K562 (cell line): ENCODE measurements at regions of chr4 and their contacts with region 1.

Region 1: DNA sequence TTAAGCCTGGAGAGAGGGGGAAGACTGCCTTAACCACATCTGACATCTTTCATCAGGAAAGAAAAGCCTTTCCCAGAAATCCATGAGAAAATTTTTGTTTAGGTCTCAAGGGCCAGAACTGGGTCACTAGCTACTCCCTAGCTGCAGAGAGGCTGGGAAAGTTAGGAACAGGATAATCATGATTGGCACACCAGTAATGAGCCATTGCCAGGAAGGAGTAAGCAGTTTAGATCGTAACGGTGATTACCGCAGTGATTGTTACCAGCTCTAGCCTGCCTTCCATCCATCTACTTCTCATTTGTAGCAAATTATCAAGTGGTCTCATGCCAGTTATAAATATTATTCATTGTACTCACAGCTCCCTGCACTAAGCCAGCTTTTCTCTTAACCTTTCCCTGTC is 22.7 kb upstream of the STX18 start:
- DNase-seq: no peak
- ATAC-seq: no peak
- H3K4me3 ChIP-seq: no peak overlapping the region
- H3K27ac ChIP-seq: no peak overlapping the region
- H3K4me1 ChIP-seq: no peaks in the 10 kb centered on the region
- H3K27me3 ChIP-seq: 0 out of 5 replicates have a peak, but pooled peaks cover 0 to 4% of the 10 kb centered on the region in 2 experiments
- CTCF ChIP-seq: no peak
- EP300 ChIP-seq: no peak
- POLR2A ChIP-seq: no peak
- RAD21 ChIP-seq: no peak

Region 2: DNA sequence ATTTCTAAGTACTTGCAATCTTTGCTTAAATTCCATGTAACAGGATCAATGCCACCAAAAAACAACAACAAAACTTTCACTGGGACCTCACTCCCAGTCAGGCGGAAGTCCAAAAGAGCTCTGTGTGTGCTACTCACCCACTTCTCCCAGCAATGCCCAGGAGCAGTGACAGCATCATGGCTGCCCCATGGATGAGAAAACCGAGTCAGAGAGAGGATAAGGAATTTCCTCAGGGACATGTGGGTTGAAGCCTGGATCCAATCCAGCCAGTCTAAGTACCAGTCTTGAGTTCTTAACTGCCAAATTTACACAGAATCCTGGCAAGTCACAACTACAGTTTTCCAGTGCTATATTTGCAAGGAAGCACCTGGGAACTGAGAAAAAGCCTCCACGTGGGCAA is 87.1 kb before region 1 on chr4:
- CTCF ChIA-PET with region 1: no interaction called
- POLR2A ChIA-PET with region 1: no interaction called
- in situ Hi-C with region 1: no loop called
- intact Hi-C with region 1: no loop called
- DNase-seq: no peak
- ATAC-seq: no peak
- H3K4me3 ChIP-seq: no peak overlapping the region
- H3K27ac ChIP-seq: no peak overlapping the region
- H3K4me1 ChIP-seq: no peaks in the 10 kb centered on the region
- H3K27me3 ChIP-seq: no peaks in the 10 kb centered on the region
- CTCF ChIP-seq: no peak
- EP300 ChIP-seq: no peak
- POLR2A ChIP-seq: no peak
- RAD21 ChIP-seq: no peak

Region 3: GRCh38 chr4:4488405-4489404 is 75.8 kb before region 1 on chr4:
- CTCF ChIA-PET with region 1: no interaction called
- POLR2A ChIA-PET with region 1: no interaction called
- in situ Hi-C with region 1: no loop called
- intact Hi-C with region 1: no loop called
- DNase-seq: peak; percentile 69 to 82 (median 72)
- ATAC-seq: peak; percentile 100
- H3K4me3 ChIP-seq: no peak overlapping the region
- H3K27ac ChIP-seq: no peak overlapping the region
- H3K4me1 ChIP-seq: no peaks in the 10 kb centered on the region
- H3K27me3 ChIP-seq: no peaks in the 10 kb centered on the region
- CTCF ChIP-seq: peak; percentile 79 to 90 (median 89)
- EP300 ChIP-seq: no peak
- POLR2A ChIP-seq: no peak
- RAD21 ChIP-seq: peak; percentile 81 to 87

Region 4: DNA sequence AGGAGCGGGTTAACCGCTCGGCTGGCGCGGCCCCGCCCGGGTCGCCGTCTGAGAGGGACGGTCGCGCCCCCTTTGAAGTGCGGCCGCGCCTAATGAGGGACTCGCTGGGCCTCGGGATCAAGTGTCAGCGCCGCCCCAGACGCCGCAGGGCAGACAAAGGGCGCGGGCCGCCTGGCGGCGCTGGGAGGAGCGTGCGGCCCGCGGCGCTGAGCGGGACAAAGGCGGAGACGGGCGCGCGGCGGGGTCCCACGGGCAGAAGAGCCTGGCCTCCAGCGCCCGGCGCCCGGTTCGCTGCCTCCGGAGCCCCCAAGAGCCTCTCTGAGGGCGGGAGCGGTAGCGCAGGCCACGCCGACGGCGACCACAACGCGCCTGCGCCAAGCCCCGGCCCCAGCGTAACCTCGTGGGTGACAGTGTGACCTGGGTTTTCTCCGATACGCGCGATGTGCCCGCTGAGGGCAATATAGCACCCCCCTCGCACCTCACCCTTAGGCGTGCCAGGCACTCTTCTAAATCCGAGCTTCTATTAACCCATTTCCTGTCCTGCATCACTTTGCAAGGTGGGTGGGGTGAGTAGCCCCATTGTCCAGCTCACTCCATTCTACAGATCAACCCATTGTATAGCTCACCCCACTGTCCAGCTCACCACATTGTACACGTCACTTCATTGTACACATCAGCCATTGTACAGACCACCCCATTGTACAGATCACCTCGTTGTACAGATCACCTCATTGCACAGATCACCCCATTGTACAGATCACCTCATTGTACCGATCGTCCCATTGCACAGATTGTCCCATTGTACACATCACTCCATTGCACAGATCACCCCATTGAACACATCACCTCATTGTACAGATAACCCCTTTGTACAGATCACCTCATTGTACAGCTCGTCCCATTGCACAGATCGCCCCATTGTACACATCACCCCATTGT is 11.0 kb after region 1 on chr4:
- CTCF ChIA-PET with region 1: no interaction called
- POLR2A ChIA-PET with region 1: interaction called, 14 read pairs
- in situ Hi-C with region 1: no loop called
- intact Hi-C with region 1: no loop called
- DNase-seq: peak; percentile 77 to 82 (median 80)
- ATAC-seq: peak; percentile 100
- H3K4me3 ChIP-seq: peak overlapping the region; percentile 48
- H3K27ac ChIP-seq: no peak overlapping the region
- H3K4me1 ChIP-seq: peaks cover 2 to 11% of the 10 kb centered on the region in 2 experiments; a peak in 2 of 5 replicates
- H3K27me3 ChIP-seq: no peaks in the 10 kb centered on the region; a peak in 1 of 5 replicates
- CTCF ChIP-seq: peak; percentile 36 to 78 (median 47); a peak in 4 of 6 replicates
- EP300 ChIP-seq: no peak
- POLR2A ChIP-seq: no peak
- RAD21 ChIP-seq: peak; percentile 41 to 48; a peak in 2 of 4 replicates